ENCODE measurements at regions of chr12 and their contacts with region 1.

Region 1: GRCh38 chr12:49644620-49644994 is 21.2 kb downstream of the PRPF40B start:
- DNase-seq: peak; percentile 93
- H3K4me3 ChIP-seq: no peak overlapping the region
- H3K27ac ChIP-seq: peak overlapping the region in 3 of 4 donors; percentile 11 to 40 (median 18)
- H3K4me1 ChIP-seq: peaks cover 0 to 22% (median 10%) of the 10 kb centered on the region in 4 donors
- H3K27me3 ChIP-seq: no peaks in the 10 kb centered on the region
- CTCF ChIP-seq: peak; percentile 93 to 98 (median 95)
- EP300 ChIP-seq: no peak
- POLR2A ChIP-seq: no peak

Region 2: DNA sequence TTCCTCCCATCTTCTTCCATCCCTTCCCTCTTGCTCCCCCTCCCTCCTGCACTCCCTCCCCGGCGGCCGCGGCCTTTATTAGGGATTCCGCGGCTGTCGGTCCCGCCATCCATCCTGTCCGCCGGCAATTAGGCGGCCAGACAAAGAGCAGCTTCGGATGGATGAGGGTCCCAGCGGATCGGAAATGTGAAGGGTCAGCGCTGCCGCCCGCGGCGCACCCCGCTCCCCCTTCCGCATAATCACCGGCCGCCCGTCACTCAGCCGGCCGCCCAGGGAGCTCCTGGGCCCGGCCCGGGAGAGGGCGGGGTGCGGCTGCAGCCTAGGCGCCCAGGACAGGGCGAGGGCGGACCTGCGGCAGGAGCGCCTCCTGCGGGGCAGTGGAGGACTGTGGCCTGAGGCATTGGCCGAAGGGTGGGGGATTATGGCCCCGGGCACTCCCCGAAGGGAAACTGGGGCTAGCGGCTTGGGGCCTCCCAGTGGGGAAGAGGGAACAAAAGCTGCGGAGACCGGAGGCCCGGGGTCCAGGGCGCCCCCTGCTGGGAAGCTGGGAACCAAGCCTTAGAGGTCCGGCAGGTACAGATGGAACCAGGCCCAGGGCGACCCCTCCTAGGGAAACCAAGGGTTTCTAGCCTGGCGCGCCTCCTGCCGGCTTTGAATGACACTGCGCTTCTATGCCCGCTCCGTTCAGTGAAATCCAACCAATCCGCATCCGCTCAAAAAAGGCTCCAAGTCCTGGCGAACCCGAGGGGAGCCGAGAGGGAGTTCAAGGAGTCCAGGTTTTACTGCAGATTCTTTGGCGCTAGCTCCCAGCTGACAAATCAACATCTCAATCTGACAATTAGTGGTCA is 302.3 kb before region 1 on chr12:
- intact Hi-C with region 1: no loop called
- DNase-seq: peak; percentile 87
- H3K4me3 ChIP-seq: peak overlapping the region; percentile 18 to 50 (median 45)
- H3K27ac ChIP-seq: peak overlapping the region in 1 of 4 donors; percentile 11
- H3K4me1 ChIP-seq: peaks cover 0 to 46% (median 45%) of the 10 kb centered on the region in 4 donors
- H3K27me3 ChIP-seq: peaks cover 37 to 96% (median 68%) of the 10 kb centered on the region in 3 donors
- CTCF ChIP-seq: peak; percentile 61 to 86 (median 69)
- EP300 ChIP-seq: no peak
- POLR2A ChIP-seq: no peak

Region 3: GRCh38 chr12:49673446-49674317 is 29.1 kb after region 1 on chr12:
- intact Hi-C with region 1: loop called (anchors 2 kb)
- DNase-seq: peak; percentile 98
- H3K4me3 ChIP-seq: peak overlapping the region in 2 of 4 donors; percentile 9 to 14
- H3K27ac ChIP-seq: peak overlapping the region; percentile 87 to 93 (median 92)
- H3K4me1 ChIP-seq: peaks cover 0 to 59% (median 49%) of the 10 kb centered on the region in 4 donors
- H3K27me3 ChIP-seq: no peaks in the 10 kb centered on the region
- CTCF ChIP-seq: peak; percentile 55 to 87 (median 75)
- EP300 ChIP-seq: peak in 2 of 4 donors; percentile 14 to 34
- POLR2A ChIP-seq: peak; percentile 41 to 54

Measured in sigmoid colon (tissue), 7 donors.